Mammary epithelial cell (primary cell): ENCODE measurements at regions of chr11 and their contacts with region 1.

Region 1: DNA sequence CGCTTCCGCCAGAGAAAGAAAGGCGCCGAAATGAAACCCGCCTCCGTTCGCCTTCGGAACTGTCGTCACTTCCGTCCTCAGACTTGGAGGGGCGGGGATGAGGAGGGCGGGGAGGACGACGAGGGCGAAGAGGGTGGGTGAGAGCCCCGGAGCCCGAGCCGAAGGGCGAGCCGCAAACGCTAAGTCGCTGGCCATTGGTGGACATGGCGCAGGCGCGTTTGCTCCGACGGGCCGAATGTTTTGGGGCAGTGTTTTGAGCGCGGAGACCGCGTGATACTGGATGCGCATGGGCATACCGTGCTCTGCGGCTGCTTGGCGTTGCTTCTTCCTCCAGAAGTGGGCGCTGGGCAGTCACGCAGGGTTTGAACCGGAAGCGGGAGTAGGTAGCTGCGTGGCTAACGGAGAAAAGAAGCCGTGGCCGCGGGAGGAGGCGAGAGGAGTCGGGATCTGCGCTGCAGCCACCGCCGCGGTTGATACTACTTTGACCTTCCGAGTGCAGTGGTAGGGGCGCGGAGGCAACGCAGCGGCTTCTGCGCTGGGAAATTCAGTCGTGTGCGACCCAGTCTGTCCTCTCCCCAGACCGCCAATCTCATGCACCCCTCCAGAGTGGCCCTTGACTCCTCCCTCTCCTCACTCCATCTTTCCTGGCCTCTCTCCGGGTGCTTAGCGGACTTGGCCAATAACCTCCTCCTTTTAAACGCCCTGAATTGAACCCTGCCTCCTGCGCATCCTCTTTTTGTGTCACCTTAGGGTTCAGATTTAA is at the start of gene ATM:
- DNase-seq: peak; percentile 99
- H3K4me3 ChIP-seq: peak within 1 kb of the TSS; percentile 82 to 92 (median 88)
- H3K27ac ChIP-seq: peak within 1 kb of the TSS; percentile 99
- H3K4me1 ChIP-seq: peaks cover 29% of the 10 kb centered on the region
- H3K27me3 ChIP-seq: no peaks in the 10 kb centered on the region
- CTCF ChIP-seq: peak; percentile 77 to 92
- total RNA-seq, gene ATM: 45.0 to 69.7 TPM

Region 2: GRCh38 chr11:108008656-108009496 is 214.0 kb before region 1 on chr11 and contains the start of gene CUL5:
- CTCF ChIA-PET with region 1: no interaction called
- dilution Hi-C with region 1: no loop called
- in situ Hi-C with region 1: no loop called
- intact Hi-C with region 1: loop called (anchors 5 kb)
- DNase-seq: peak; percentile 86
- H3K4me3 ChIP-seq: peak within 1 kb of the TSS; percentile 62 to 97 (median 69)
- H3K27ac ChIP-seq: peak within 1 kb of the TSS; percentile 88
- H3K4me1 ChIP-seq: peaks cover 14% of the 10 kb centered on the region
- H3K27me3 ChIP-seq: no peaks in the 10 kb centered on the region
- CTCF ChIP-seq: peak; percentile 75 to 94
- total RNA-seq, gene CUL5: 29.8 to 36.7 TPM

Region 3: GRCh38 chr11:108093128-108093904 is 129.6 kb before region 1 on chr11:
- CTCF ChIA-PET with region 1: no interaction called
- dilution Hi-C with region 1: no loop called
- in situ Hi-C with region 1: no loop called
- intact Hi-C with region 1: no loop called
- DNase-seq: no peak
- H3K4me3 ChIP-seq: no peak overlapping the region
- H3K27ac ChIP-seq: no peak overlapping the region
- H3K4me1 ChIP-seq: no peaks in the 10 kb centered on the region
- H3K27me3 ChIP-seq: no peaks in the 10 kb centered on the region
- CTCF ChIP-seq: no peak

Region 4: GRCh38 chr11:108121274-108122155 is 101.4 kb before region 1 on chr11 and contains the start of gene ACAT1:
- CTCF ChIA-PET with region 1: no interaction called
- dilution Hi-C with region 1: no loop called
- in situ Hi-C with region 1: no loop called
- intact Hi-C with region 1: loop called (anchors 1 kb)
- DNase-seq: peak; percentile 89
- H3K4me3 ChIP-seq: peak within 1 kb of the TSS; percentile 76 to 96 (median 96)
- H3K27ac ChIP-seq: peak within 1 kb of the TSS; percentile 72
- H3K4me1 ChIP-seq: peaks cover 12% of the 10 kb centered on the region
- H3K27me3 ChIP-seq: no peaks in the 10 kb centered on the region
- CTCF ChIP-seq: peak in 1 of 2 donors; percentile 21
- total RNA-seq, gene ACAT1: 35.0 to 35.6 TPM

Region 5: GRCh38 chr11:108199446-108200321 is 23.2 kb before region 1 on chr11:
- CTCF ChIA-PET with region 1: interaction called, 3 read pairs
- dilution Hi-C with region 1: no loop called
- in situ Hi-C with region 1: no loop called
- intact Hi-C with region 1: loop called (anchors 1 kb)
- DNase-seq: peak; percentile 97
- H3K4me3 ChIP-seq: peak overlapping the region; percentile 20 to 48 (median 35)
- H3K27ac ChIP-seq: peak overlapping the region; percentile 78
- H3K4me1 ChIP-seq: peaks cover 26% of the 10 kb centered on the region
- H3K27me3 ChIP-seq: no peaks in the 10 kb centered on the region
- CTCF ChIP-seq: no peak

Region 6: DNA sequence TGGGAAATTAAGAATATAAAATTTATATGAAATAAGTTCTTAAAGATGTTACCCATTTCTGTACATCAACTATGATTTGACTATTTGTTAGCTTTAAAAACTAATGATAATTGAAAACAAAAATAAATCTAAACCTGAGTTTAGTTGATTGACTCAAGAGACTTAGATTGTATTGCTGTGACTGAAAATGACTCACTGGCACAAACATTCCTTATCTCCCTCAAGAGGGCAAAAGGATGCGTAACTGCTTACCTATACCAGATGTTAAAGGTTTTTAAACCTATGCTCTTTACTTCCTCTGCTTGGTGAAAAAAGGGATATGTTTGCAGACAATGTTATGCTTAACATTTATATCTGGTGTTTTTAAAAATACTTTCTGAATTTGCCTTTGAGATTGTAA is 30.3 kb after region 1 on chr11:
- CTCF ChIA-PET with region 1: no interaction called
- dilution Hi-C with region 1: no loop called
- in situ Hi-C with region 1: no loop called
- intact Hi-C with region 1: loop called (anchors 1 kb)
- DNase-seq: peak; percentile 49
- H3K4me3 ChIP-seq: no peak overlapping the region
- H3K27ac ChIP-seq: no peak overlapping the region
- H3K4me1 ChIP-seq: no peaks in the 10 kb centered on the region
- H3K27me3 ChIP-seq: no peaks in the 10 kb centered on the region
- CTCF ChIP-seq: peak in 1 of 2 donors; percentile 2

Region 7: DNA sequence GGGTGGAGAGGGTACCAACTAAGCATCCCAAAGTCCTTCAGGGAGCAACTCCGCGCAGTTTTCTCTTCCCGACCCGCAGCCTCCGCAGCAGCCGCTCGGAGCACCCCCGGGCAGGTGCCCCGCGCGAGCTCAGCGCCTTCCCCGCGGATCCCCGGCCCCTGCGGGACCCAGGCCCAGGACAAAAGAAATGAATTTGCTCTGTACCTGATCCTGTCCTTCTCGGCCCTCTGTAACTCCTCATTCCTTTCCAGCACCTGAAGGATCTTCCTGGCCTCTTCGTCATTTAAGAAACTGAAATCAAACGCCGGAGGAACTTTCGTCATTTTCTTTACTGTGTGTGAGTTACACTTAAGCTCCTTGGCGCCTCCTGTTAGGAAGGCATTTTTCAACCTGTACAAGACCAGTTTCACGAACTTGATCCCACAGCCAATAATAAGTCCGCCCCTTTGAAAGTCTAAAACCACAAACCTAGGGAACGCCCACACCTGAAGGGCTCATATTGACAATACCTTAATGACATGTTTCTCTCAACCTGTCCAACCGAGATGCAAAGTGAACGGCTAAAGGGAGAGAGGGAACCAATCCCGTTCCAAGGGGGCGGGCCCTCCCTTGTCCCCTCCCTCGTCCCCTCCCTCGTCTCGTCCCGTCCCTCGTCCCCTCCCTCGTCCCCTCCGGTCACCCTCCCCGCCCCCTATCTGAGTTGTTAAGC is 370.5 kb after region 1 on chr11 and contains the start of gene EXPH5:
- CTCF ChIA-PET with region 1: no interaction called
- dilution Hi-C with region 1: no loop called
- in situ Hi-C with region 1: no loop called
- intact Hi-C with region 1: loop called (anchors 5 kb)
- DNase-seq: peak; percentile 98
- H3K4me3 ChIP-seq: peak within 1 kb of the TSS; percentile 69 to 90 (median 77)
- H3K27ac ChIP-seq: peak within 1 kb of the TSS; percentile 89
- H3K4me1 ChIP-seq: peaks cover 15% of the 10 kb centered on the region
- H3K27me3 ChIP-seq: no peaks in the 10 kb centered on the region
- CTCF ChIP-seq: peak in 1 of 2 donors; percentile 16
- total RNA-seq, gene EXPH5: 17.0 to 27.7 TPM

Region 8: DNA sequence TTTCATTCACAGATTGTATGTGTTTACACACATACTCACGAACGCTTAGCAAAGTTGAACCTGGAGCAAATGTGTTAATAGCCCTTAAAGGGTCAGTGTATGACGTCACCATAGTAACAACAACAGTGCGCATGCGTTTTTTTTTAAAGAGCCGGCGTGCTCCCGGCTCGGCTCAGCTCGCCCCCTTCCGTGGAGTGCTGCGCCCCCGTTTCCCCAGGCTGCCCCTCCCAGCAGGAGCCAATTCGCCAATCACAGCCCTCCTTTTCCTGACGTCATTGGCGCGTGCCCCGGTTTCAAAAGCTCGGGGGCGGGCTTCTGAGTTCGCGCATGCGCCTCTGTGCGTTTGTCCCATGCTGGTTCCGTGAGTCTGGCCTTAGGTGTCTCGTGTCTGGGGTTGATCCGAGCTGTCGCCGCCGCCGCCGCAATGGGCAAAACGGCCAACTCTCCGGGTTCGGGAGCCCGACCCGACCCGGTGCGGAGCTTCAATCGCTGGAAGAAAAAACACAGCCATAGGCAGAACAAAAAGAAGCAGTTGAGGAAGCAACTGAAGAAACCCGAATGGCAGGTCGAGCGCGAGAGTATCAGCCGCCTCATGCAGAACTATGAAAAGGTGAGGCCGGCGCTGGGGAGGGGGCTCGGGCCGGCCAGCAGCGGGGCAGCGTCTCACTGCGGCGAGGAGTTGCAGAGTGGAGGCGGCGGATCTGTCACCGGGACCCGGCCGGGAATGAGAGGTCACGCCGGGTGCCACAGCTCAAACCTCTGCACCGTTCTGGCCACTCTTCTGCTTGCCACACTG is 442.1 kb after region 1 on chr11 and contains the start of gene DDX10:
- CTCF ChIA-PET with region 1: no interaction called
- dilution Hi-C with region 1: no loop called
- in situ Hi-C with region 1: loop called (anchors 25 kb)
- intact Hi-C with region 1: no loop called
- DNase-seq: peak; percentile 97
- H3K4me3 ChIP-seq: peak within 1 kb of the TSS; percentile 74 to 90 (median 76)
- H3K27ac ChIP-seq: peak within 1 kb of the TSS; percentile 52
- H3K4me1 ChIP-seq: peaks cover 11% of the 10 kb centered on the region
- H3K27me3 ChIP-seq: no peaks in the 10 kb centered on the region
- CTCF ChIP-seq: peak; percentile 7 to 39
- total RNA-seq, gene DDX10: 12.8 to 32.1 TPM